ENCODE measurements at regions of chr15 and their contacts with region 1.

Region 1: DNA sequence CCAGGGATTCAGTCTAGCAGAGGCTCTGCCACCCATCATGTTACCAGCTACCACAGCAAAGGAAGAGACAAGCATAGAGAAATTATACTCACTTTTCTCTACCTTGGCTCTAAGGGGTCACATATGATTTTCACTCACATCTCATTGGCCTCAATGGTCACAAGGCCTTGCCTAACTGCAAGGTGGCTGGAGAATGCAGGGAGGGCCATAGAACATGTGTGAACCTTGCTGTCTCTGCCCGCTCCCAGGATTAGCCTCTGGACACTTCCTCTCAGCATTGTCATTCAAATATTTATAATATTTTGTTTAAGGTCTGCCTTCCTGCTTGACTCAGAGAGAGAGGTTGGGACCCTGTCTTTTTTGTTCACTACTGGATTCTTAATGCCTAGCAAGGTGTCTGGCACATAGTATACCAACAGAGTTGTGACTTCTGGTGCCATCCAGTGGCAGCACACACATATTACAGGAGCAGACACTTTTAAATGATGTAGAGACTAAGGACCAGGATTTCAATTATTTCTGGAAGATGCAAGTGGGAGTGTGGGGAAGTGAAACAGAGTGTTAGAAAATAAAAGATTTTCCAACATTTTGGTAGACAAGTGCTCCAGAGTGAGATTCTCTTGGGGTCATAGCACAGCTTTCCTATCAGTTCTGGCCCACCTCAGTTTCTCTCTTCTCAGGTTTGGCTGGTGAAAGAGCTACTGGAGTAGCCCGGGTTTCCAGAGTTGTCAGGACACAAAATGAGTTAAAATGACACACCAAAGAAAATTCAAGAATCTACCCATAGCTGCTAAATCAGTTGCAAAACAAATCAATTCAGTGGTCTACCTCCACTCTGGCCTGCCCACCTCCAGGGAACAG is 119.0 kb upstream of the RASGRP1 start:
- DNase-seq: peak; percentile 37 to 88 (median 74)
- ATAC-seq: peak; percentile 62
- H3K4me3 ChIP-seq: no peak overlapping the region
- H3K4me3 Mint-ChIP-seq: peak overlapping the region; percentile 3
- H3K27ac ChIP-seq: peak overlapping the region in 1 of 2 experiments; percentile 15
- H3K27ac Mint-ChIP-seq: peak overlapping the region; percentile 91
- H3K4me1 ChIP-seq: peaks cover 60% of the 10 kb centered on the region
- H3K4me1 Mint-ChIP-seq: peaks cover 76% of the 10 kb centered on the region
- H3K27me3 ChIP-seq: no peaks in the 10 kb centered on the region
- H3K27me3 Mint-ChIP-seq: no peaks in the 10 kb centered on the region
- CTCF ChIP-seq: peak; percentile 93

Region 2: GRCh38 chr15:38440353-38441129 is 243.1 kb before region 1 on chr15:
- CTCF ChIA-PET with region 1: interaction called, 70 read pairs
- POLR2A ChIA-PET with region 1: no interaction called
- intact Hi-C with region 1: no loop called
- DNase-seq: peak in 8 of 9 experiments; percentile 24 to 84 (median 51)
- ATAC-seq: peak; percentile 99
- H3K4me3 ChIP-seq: no peak overlapping the region
- H3K4me3 Mint-ChIP-seq: no peak overlapping the region
- H3K27ac ChIP-seq: no peak overlapping the region
- H3K27ac Mint-ChIP-seq: no peak overlapping the region
- H3K4me1 ChIP-seq: peaks cover 4% of the 10 kb centered on the region
- H3K4me1 Mint-ChIP-seq: peaks cover 3% of the 10 kb centered on the region
- H3K27me3 ChIP-seq: no peaks in the 10 kb centered on the region
- H3K27me3 Mint-ChIP-seq: peaks cover 28% of the 10 kb centered on the region
- CTCF ChIP-seq: peak; percentile 98

Region 3: GRCh38 chr15:38536201-38536676 is 147.4 kb before region 1 on chr15:
- CTCF ChIA-PET with region 1: interaction called, 32 read pairs
- POLR2A ChIA-PET with region 1: interaction called, 4 read pairs
- intact Hi-C with region 1: no loop called
- DNase-seq: no peak
- ATAC-seq: no peak
- H3K4me3 ChIP-seq: no peak overlapping the region
- H3K4me3 Mint-ChIP-seq: no peak overlapping the region
- H3K27ac ChIP-seq: peak overlapping the region in 1 of 2 experiments; percentile 30
- H3K27ac Mint-ChIP-seq: peak overlapping the region; percentile 89
- H3K4me1 ChIP-seq: peaks cover 96% of the 10 kb centered on the region
- H3K4me1 Mint-ChIP-seq: peaks cover 98% of the 10 kb centered on the region
- H3K27me3 ChIP-seq: no peaks in the 10 kb centered on the region
- H3K27me3 Mint-ChIP-seq: no peaks in the 10 kb centered on the region
- CTCF ChIP-seq: no peak

Region 4: DNA sequence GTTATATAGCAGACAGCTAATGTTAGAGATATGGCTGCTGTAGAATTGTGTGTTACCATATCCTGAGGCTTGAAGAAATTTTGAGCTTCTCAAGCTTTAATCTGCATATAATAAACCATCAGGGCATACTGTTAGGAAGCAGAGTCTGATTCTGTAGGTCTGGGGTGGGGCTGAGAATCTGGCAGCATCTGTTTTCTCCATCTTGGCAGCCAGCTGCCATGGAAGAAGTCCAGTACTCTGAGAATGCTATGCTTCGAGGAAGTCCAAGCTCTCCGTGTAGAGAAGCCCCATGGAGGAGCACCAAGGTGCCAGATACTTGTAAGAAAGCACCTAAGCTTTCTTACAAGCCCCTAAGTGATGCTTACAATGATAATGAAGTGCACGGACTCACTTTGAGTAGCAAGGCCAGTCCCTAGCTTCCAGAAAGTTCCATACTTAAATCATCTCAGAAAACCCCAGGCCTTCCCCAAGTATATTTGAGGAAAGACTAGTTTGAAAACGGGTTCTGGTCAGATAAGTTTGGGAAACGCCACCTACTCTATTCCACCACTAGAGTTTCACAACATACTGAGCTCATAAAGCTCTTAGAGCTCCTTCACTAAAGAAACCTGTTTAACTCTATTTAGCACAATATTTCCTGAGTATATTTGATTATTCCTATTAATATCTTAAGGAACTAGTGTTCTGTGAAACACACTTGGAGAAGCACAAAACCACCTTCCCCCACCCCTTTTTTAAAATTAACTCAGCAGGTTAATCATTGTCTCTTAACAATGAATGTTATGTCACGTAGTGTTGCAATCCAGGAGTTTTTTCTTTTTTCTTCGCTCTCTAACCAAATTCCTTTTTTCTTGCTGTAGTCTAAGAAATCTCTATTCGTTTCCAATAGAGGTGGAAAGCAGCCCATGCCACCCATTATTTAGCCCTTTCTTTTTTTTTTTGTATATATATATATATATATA is 59.1 kb before region 1 on chr15:
- CTCF ChIA-PET with region 1: interaction called, 29 read pairs
- POLR2A ChIA-PET with region 1: no interaction called
- intact Hi-C with region 1: no loop called
- DNase-seq: no peak
- ATAC-seq: no peak
- H3K4me3 ChIP-seq: no peak overlapping the region
- H3K4me3 Mint-ChIP-seq: no peak overlapping the region
- H3K27ac ChIP-seq: no peak overlapping the region
- H3K27ac Mint-ChIP-seq: no peak overlapping the region
- H3K4me1 ChIP-seq: peaks cover 21% of the 10 kb centered on the region
- H3K4me1 Mint-ChIP-seq: peaks cover 33% of the 10 kb centered on the region
- H3K27me3 ChIP-seq: no peaks in the 10 kb centered on the region
- H3K27me3 Mint-ChIP-seq: no peaks in the 10 kb centered on the region
- CTCF ChIP-seq: no peak

Region 5: GRCh38 chr15:38647683-38648082 is 35.9 kb before region 1 on chr15:
- CTCF ChIA-PET with region 1: interaction called, 508 read pairs
- POLR2A ChIA-PET with region 1: interaction called, 88 read pairs
- intact Hi-C with region 1: no loop called
- DNase-seq: no peak
- ATAC-seq: no peak
- H3K4me3 ChIP-seq: no peak overlapping the region
- H3K4me3 Mint-ChIP-seq: peak overlapping the region; percentile 53
- H3K27ac ChIP-seq: no peak overlapping the region
- H3K27ac Mint-ChIP-seq: peak overlapping the region; percentile 96
- H3K4me1 ChIP-seq: peaks cover 79% of the 10 kb centered on the region
- H3K4me1 Mint-ChIP-seq: peaks cover 85% of the 10 kb centered on the region
- H3K27me3 ChIP-seq: no peaks in the 10 kb centered on the region
- H3K27me3 Mint-ChIP-seq: no peaks in the 10 kb centered on the region
- CTCF ChIP-seq: no peak

Region 6: GRCh38 chr15:38699633-38700230 is 16.1 kb after region 1 on chr15:
- CTCF ChIA-PET with region 1: interaction called, 209 read pairs
- POLR2A ChIA-PET with region 1: interaction called, 18 read pairs
- intact Hi-C with region 1: loop called in 1 of 2 experiments (anchors 1 kb)
- DNase-seq: peak; percentile 40 to 87 (median 71)
- ATAC-seq: peak; percentile 56
- H3K4me3 ChIP-seq: no peak overlapping the region
- H3K4me3 Mint-ChIP-seq: no peak overlapping the region
- H3K27ac ChIP-seq: no peak overlapping the region
- H3K27ac Mint-ChIP-seq: no peak overlapping the region
- H3K4me1 ChIP-seq: peaks cover 46% of the 10 kb centered on the region
- H3K4me1 Mint-ChIP-seq: peaks cover 51% of the 10 kb centered on the region
- H3K27me3 ChIP-seq: no peaks in the 10 kb centered on the region
- H3K27me3 Mint-ChIP-seq: no peaks in the 10 kb centered on the region
- CTCF ChIP-seq: peak; percentile 98

Region 7: DNA sequence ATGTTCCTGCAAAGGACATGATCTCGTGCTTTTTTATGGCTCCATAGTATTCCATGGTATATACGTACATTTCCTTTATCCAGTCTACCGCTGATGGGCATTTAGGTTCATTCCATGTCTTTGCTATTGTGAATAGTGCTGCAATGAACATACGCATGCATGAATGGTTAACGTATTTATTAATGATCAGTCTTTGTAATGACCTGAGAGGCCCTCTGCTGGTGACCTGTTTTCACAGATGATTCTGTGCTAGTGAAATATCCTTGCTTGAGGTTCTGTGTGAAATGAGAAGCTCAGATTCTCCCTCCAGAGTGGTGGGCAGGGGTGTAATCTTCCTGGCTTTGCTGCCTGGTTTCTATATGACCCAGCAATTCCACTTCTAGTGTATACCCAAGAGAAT is 41.2 kb after region 1 on chr15:
- CTCF ChIA-PET with region 1: no interaction called
- POLR2A ChIA-PET with region 1: no interaction called
- intact Hi-C with region 1: no loop called
- DNase-seq: peak in 1 of 9 experiments; percentile 7
- ATAC-seq: no peak
- H3K4me3 ChIP-seq: no peak overlapping the region
- H3K4me3 Mint-ChIP-seq: no peak overlapping the region
- H3K27ac ChIP-seq: no peak overlapping the region
- H3K27ac Mint-ChIP-seq: no peak overlapping the region
- H3K4me1 ChIP-seq: no peaks in the 10 kb centered on the region
- H3K4me1 Mint-ChIP-seq: no peaks in the 10 kb centered on the region
- H3K27me3 ChIP-seq: no peaks in the 10 kb centered on the region
- H3K27me3 Mint-ChIP-seq: no peaks in the 10 kb centered on the region
- CTCF ChIP-seq: no peak

Region 8: DNA sequence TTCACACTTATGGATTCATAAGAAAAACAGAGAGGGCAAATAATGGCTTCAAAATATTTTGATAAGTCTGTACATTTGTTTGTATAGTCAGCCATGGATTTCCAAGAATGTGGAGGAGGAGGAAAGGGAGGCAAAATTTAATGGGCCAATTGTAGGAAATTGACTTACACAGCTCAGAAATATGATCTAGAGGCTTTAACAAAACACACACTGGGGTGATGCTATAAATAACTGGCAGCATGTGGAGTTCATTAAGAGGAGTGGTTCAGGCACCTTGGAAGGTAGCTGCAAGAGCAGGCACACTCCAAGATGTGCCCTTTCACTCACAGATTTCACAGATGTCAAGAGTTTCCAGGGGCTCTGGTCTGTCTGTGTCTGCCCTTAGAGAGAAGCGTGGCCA is 74.4 kb after region 1 on chr15:
- CTCF ChIA-PET with region 1: no interaction called
- POLR2A ChIA-PET with region 1: no interaction called
- intact Hi-C with region 1: no loop called
- DNase-seq: no peak
- ATAC-seq: no peak
- H3K4me3 ChIP-seq: no peak overlapping the region
- H3K4me3 Mint-ChIP-seq: no peak overlapping the region
- H3K27ac ChIP-seq: no peak overlapping the region
- H3K27ac Mint-ChIP-seq: no peak overlapping the region
- H3K4me1 ChIP-seq: no peaks in the 10 kb centered on the region
- H3K4me1 Mint-ChIP-seq: no peaks in the 10 kb centered on the region
- H3K27me3 ChIP-seq: no peaks in the 10 kb centered on the region
- H3K27me3 Mint-ChIP-seq: peaks cover 30% of the 10 kb centered on the region
- CTCF ChIP-seq: no peak

Measured in CD8-positive, alpha-beta T cell (primary cell).